ENCODE measurements at regions of chr11 and their contacts with region 1.

Region 1: DNA sequence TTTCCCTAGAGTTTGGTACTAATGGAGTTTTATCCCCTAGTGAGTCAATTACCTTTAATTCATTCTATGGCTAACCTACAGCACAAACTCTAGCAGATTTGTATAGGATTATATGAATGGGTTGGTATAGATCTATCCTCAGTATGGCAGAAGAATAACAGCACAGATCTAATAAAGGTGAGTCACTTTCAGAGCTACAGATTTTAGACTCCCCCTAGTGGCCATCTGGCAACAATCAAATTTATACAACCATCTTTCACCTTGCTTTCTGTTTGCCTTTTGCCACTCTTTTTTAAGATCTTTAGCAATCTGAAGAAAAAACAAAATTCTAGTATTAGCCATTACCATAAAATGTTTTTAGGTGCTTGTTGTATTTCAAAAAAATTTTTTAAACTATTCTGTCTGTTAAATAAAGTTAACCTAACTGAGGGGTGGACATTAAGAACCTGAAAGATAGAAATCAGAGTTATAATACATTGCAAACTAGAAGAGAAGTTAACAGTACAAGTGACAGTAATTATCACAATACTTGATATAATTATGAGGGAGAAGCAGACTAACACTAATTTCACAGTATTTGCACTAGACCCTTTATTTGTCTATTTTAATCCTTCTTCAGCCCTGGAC is 25.8 kb downstream of the DDIAS start:
- DNase-seq: no peak
- H3K4me3 Mint-ChIP-seq: no peak overlapping the region
- H3K27ac Mint-ChIP-seq: no peak overlapping the region
- H3K4me1 Mint-ChIP-seq: peaks cover 20% of the 10 kb centered on the region
- H3K27me3 Mint-ChIP-seq: no peaks in the 10 kb centered on the region

Region 2: GRCh38 chr11:82906244-82906654 is 21.1 kb before region 1 on chr11:
- intact Hi-C with region 1: loop called (anchors 1 kb)
- DNase-seq: no peak
- H3K4me3 Mint-ChIP-seq: no peak overlapping the region
- H3K27ac Mint-ChIP-seq: no peak overlapping the region
- H3K4me1 Mint-ChIP-seq: peaks cover 51% of the 10 kb centered on the region
- H3K27me3 Mint-ChIP-seq: no peaks in the 10 kb centered on the region

Measured in activated T-helper 2 cell treated with anti-CD3 and anti-CD28 coated beads, Interferon-gamma antibody, Interleukin-2, Interleukin-4, amounts not matched to agents 10 μg/mL and 5 μg/mL and 100 μg/mL, durations not matched to agents 14 hours and 24 hours and 36 hours (primary cell).